ENCODE measurements at regions of chr18 and their contacts with region 1.

Region 1: DNA sequence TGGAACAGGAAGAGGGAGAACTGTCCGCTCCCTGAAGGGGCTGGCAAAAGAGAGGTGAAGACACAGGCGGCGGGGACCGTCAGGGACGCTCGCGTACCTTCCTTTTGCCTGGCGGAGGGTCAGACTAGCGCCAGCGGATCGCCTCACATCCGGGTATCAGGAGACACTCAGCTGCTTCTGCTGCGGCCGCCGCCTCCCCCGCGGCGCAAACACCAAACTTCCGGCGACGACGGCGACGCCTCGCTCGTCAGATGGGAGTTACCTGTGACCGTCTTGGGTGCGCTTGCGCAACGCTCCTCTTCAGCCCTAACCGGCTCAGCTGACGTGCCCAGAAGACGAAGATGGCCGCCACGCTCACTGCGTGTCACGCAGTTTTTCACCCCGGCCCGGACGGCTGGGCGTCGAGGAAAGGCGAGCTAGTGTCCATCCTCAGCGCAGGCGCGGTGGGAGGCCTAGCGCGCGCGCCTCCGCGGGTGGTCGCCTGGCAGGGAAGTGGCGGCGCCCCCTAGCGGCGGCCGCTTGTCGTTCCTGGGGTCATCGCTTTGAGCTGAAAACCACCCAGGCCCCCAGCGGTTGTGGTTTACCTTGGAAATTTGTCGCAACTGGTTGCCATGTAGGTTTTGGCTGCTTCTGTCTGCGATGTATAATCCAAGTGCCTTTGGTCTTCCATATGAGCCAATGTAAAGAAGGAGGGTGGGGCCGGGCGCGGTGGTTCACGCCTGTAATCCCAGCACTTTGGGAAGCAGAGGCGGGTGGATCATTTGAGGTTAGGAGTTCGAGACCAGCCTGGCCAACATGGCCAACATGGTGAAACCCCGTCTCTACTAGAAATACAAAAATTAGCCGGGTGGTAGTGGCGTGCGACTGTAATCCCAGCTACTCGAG is at the start of gene ESCO1:
- DNase-seq: peak; percentile 97
- H3K4me3 Mint-ChIP-seq: peak within 1 kb of the TSS; percentile 93
- H3K27ac Mint-ChIP-seq: peak within 1 kb of the TSS; percentile 97
- H3K4me1 Mint-ChIP-seq: peaks cover 23% of the 10 kb centered on the region
- H3K27me3 Mint-ChIP-seq: no peaks in the 10 kb centered on the region
- total RNA-seq, gene ESCO1: 18.6 to 22.0 TPM

Region 2: DNA sequence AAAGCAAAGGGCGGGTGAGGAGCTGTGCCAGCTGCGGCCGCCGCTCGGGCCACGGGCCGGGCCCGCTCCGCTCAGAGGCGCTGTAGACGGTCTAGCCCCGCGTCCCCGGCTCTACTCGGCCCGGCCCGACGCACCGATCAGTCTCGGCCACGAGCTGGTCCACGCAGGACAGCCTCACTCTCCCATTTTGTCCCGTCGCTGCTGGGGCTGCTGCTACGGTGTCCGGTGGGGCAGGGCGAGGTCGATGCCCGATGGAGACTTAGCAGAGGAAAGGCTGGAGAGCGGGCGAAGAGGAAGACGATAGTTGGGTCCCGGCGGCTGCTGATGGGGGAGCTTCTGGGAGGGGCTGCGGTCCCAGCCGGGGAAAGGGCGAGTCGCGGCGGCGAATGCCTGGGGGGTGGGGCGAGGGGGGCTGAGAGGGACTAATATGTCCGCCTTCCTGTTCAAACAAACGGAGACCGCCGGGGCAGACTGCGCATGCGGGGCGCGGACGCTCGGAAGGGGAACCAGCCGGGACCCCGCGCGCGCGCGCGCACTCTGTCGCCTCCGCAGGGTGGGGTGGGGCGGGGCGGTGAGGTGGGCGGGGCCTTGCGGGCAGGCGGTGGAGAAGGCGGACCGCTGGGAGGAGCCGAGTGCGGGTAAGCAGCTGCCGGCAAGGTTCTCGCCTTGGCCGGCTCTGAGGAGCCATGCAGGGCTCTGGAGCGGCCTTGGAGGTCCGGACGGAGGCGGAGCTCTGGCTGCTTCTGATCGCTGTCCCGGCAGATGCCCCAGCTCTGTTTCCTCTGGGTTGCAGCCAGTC is 489.2 kb before region 1 on chr18 and contains the start of gene ROCK1:
- CTCF ChIA-PET with region 1: interaction called, 7 read pairs
- POLR2A ChIA-PET with region 1: interaction called, 3 read pairs
- intact Hi-C with region 1: loop called (anchors 1 kb)
- DNase-seq: peak; percentile 99
- H3K4me3 Mint-ChIP-seq: no peak within 1 kb of the TSS
- H3K27ac Mint-ChIP-seq: peak within 1 kb of the TSS; percentile 95
- H3K4me1 Mint-ChIP-seq: no peaks in the 10 kb centered on the region
- H3K27me3 Mint-ChIP-seq: no peaks in the 10 kb centered on the region
- total RNA-seq, gene ROCK1: 54.9 to 59.4 TPM

Region 3: DNA sequence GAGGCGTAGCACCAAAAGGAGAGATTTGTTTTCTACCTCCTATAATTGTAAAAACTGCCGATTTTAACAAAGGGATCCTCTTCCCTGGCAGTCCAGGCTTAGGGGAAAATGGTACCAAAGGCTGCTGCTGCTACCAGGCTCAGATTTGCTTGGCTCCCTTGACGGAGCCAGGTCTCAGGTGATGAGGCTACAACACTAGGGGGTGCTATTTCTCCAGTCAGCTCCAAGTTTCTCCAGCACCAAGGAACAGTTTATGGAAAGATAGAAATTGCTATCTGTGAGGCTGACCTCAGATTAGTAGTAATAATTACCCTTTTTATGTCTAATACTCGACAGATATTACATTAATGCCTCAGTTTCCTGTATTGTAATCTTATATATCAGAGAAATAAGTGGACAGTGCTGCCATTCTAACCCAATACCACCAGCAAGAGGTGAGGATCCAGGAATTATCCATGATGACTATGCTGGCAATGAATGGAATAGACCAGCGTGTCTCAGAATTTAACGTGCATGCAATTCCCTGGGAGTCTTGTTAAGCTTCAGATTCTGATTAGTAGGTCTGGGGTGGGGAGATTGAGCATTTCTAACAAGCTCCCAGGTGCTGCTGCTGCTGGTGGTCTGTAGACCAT is 111.5 kb before region 1 on chr18:
- CTCF ChIA-PET with region 1: interaction called, 11 read pairs
- POLR2A ChIA-PET with region 1: no interaction called
- intact Hi-C with region 1: loop called (anchors 5 kb)
- DNase-seq: peak; percentile 41
- H3K4me3 Mint-ChIP-seq: no peak overlapping the region
- H3K27ac Mint-ChIP-seq: no peak overlapping the region
- H3K4me1 Mint-ChIP-seq: no peaks in the 10 kb centered on the region
- H3K27me3 Mint-ChIP-seq: peaks cover 2% of the 10 kb centered on the region

Region 4: DNA sequence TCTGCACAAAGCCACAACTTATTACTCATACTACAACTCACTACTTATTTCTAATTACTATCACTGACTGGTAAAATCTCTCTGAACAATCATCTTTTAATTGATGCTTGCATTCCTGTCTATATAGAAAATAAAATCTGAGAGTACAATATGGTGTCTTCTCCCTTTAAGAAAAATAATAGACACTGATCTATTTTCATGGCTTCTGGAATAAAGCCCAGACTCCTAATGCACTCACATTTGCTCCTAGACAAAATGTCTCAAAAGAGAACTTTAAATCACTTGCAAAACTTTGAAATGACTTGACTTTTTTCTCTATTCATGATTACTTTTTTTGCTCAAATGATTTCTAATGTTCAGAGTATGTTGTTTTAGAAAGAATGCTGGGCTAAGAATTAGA is 29.0 kb before region 1 on chr18:
- CTCF ChIA-PET with region 1: interaction called, 12 read pairs
- POLR2A ChIA-PET with region 1: interaction called, 4 read pairs
- intact Hi-C with region 1: no loop called
- DNase-seq: no peak
- H3K4me3 Mint-ChIP-seq: no peak overlapping the region
- H3K27ac Mint-ChIP-seq: no peak overlapping the region
- H3K4me1 Mint-ChIP-seq: peaks cover 3% of the 10 kb centered on the region
- H3K27me3 Mint-ChIP-seq: no peaks in the 10 kb centered on the region

Region 5: DNA sequence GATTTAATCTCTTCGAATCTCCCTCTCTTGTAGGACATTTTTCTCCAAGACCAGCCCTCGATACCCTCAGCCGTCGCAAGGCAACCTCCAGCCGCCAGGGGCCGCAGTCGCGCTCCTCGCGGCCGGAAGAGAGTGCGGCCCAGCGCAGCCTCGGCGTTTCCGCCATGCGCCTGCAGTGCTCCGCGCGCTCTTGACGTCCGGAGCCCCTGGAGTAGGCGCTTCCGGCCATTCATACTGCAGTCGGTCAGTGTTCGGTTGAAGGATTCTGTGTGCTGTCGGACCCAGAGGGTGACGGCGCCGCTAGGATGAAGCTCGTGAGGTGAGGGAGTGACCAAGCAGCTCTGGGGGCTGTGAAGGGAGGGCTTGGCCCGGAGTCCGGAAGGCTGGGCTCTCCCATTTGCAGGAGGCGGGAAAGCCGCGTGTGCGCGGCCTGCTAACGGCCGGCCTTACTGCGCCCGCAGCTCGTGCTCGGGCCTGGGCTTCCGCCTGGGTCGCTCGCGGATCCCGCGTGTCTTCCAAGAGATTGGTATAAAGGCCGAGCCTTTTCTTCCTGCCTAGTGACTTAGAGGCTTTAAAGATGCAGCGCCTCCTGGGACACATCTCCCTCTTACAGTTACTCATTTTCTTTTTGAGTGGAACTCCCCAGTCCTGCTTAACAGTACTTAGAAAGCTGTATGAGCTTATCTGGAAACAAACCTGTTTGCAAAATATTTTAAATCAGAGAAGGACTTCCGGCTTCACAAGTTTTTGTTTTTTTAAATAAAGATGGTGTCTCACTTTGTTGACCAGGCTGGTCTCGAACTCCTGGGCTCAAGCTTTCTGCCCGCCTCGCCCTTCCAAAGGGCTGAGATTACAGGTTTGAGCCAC is 11.6 kb after region 1 on chr18 and contains the start of gene SNRPD1:
- CTCF ChIA-PET with region 1: interaction called, 139 read pairs
- POLR2A ChIA-PET with region 1: interaction called, 49 read pairs
- intact Hi-C with region 1: loop called (anchors 1 kb)
- DNase-seq: peak; percentile 94
- H3K4me3 Mint-ChIP-seq: peak within 1 kb of the TSS; percentile 86
- H3K27ac Mint-ChIP-seq: peak within 1 kb of the TSS; percentile 94
- H3K4me1 Mint-ChIP-seq: peaks cover 31% of the 10 kb centered on the region
- H3K27me3 Mint-ChIP-seq: no peaks in the 10 kb centered on the region
- total RNA-seq, gene SNRPD1: 153 to 164 TPM

Region 6: GRCh38 chr18:21682371-21683051 is 81.7 kb after region 1 on chr18:
- CTCF ChIA-PET with region 1: interaction called, 4 read pairs
- POLR2A ChIA-PET with region 1: interaction called, 4 read pairs
- intact Hi-C with region 1: loop called (anchors 1 kb)
- DNase-seq: peak; percentile 36
- H3K4me3 Mint-ChIP-seq: no peak overlapping the region
- H3K27ac Mint-ChIP-seq: no peak overlapping the region
- H3K4me1 Mint-ChIP-seq: peaks cover 25% of the 10 kb centered on the region
- H3K27me3 Mint-ChIP-seq: no peaks in the 10 kb centered on the region

Region 7: GRCh38 chr18:21704603-21705364 is 104.0 kb after region 1 on chr18 and contains the start of gene ABHD3:
- CTCF ChIA-PET with region 1: interaction called, 7 read pairs
- POLR2A ChIA-PET with region 1: interaction called, 10 read pairs
- intact Hi-C with region 1: loop called (anchors 1 kb)
- DNase-seq: peak; percentile 95
- H3K4me3 Mint-ChIP-seq: peak within 1 kb of the TSS; percentile 91
- H3K27ac Mint-ChIP-seq: peak within 1 kb of the TSS; percentile 88
- H3K4me1 Mint-ChIP-seq: peaks cover 21% of the 10 kb centered on the region
- H3K27me3 Mint-ChIP-seq: no peaks in the 10 kb centered on the region
- total RNA-seq, gene ABHD3: 18.7 to 22.1 TPM

Region 8: GRCh38 chr18:22465859-22466457 is 865.2 kb after region 1 on chr18:
- CTCF ChIA-PET with region 1: no interaction called
- POLR2A ChIA-PET with region 1: no interaction called
- intact Hi-C with region 1: no loop called
- DNase-seq: no peak
- H3K4me3 Mint-ChIP-seq: no peak overlapping the region
- H3K27ac Mint-ChIP-seq: no peak overlapping the region
- H3K4me1 Mint-ChIP-seq: no peaks in the 10 kb centered on the region
- H3K27me3 Mint-ChIP-seq: no peaks in the 10 kb centered on the region